T-cell (primary cell): ENCODE measurements at regions of chr14 and their contacts with region 1.

Region 1: GRCh38 chr14:21014761-21015190 is 10.1 kb downstream of the NDRG2 start:
- DNase-seq: peak; percentile 23 to 91 (median 73)
- ATAC-seq: peak; percentile 68 to 87 (median 79)
- H3K4me3 ChIP-seq: no peak overlapping the region
- H3K4me3 Mint-ChIP-seq: no peak overlapping the region
- H3K27ac ChIP-seq: no peak overlapping the region
- H3K27ac Mint-ChIP-seq: no peak overlapping the region
- H3K4me1 ChIP-seq: no peaks in the 10 kb centered on the region
- H3K4me1 Mint-ChIP-seq: no peaks in the 10 kb centered on the region
- H3K27me3 ChIP-seq: peaks cover 0 to 9% of the 10 kb centered on the region in 2 experiments
- H3K27me3 Mint-ChIP-seq: peaks cover 17 to 25% of the 10 kb centered on the region in 2 donors

Region 2: DNA sequence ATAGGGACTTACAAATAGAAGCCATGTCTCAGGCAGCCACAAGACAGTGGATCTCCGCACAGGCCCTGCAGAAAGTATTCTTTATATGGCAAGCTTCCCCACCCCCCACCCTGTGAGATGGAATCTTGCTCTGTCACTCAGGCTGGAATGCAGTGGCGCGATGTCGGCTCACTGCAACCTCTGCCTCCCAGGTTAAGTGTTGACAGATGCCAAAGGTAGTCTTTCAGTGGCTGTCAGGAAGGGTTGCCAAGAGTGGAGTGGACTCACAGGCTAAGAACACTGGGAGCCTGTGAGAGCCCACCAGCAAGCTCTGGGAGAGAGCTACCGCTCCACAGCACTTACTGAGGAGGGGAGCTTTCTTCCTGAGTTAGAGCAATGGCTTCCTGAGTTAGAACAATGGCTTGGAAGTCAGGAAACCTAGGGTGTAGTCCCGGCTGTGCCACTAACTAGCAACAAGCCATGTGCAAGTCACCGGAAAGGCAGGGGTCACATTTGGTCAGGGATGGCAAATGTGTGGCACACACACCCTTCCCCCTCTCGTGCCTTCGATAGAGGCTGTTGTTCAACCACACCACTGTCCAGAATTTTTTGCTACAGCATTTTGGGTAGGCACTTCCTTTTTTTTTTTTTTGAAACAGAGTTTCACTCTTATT is 214.8 kb before region 1 on chr14:
- CTCF ChIA-PET with region 1: no interaction called
- POLR2A ChIA-PET with region 1: no interaction called
- DNase-seq: no peak
- ATAC-seq: no peak
- H3K4me3 ChIP-seq: no peak overlapping the region
- H3K4me3 Mint-ChIP-seq: no peak overlapping the region
- H3K27ac ChIP-seq: no peak overlapping the region
- H3K27ac Mint-ChIP-seq: no peak overlapping the region
- H3K4me1 ChIP-seq: no peaks in the 10 kb centered on the region
- H3K4me1 Mint-ChIP-seq: peaks cover 4 to 15% (median 6%) of the 10 kb centered on the region in 3 donors
- H3K27me3 ChIP-seq: peaks cover 0 to 23% of the 10 kb centered on the region in 2 experiments
- H3K27me3 Mint-ChIP-seq: peaks cover 5 to 23% of the 10 kb centered on the region in 2 donors

Region 3: DNA sequence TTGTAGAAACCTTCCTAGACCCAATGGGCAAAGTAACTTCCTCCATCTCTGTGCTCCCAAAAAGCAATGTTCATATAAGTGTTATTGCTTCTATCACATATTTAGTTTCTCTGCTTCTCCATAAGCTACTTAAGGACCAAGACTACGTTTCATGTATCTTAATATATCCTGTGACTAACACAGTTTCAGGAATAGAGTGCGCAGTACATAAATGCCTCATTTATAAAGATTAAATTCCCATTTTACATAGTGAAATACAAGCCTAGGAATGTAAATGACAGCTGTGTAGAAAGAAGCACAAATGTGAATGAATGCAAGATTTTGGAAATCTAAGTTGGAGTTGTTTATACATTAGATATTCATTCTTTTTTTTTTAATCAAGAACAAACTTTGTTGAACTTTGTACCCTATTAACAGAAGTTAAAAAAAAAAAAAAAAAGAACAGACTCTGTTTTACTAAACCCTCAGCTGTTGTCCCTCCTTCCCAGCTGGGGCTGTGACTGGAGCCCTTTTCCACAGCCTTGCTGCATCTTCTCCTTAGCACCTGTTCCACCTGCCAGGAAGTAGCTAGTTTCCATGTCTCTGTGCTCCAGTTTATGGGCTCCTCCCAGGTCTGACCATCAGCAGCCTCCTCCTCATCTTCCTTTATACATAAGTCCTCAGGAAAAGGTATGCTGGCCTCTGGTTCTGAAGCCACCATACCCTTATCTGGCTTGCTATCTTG is 32.0 kb before region 1 on chr14:
- CTCF ChIA-PET with region 1: no interaction called
- POLR2A ChIA-PET with region 1: no interaction called
- DNase-seq: no peak
- ATAC-seq: no peak
- H3K4me3 ChIP-seq: no peak overlapping the region
- H3K4me3 Mint-ChIP-seq: no peak overlapping the region
- H3K27ac ChIP-seq: no peak overlapping the region
- H3K27ac Mint-ChIP-seq: no peak overlapping the region
- H3K4me1 ChIP-seq: no peaks in the 10 kb centered on the region
- H3K4me1 Mint-ChIP-seq: no peaks in the 10 kb centered on the region
- H3K27me3 ChIP-seq: peaks cover 0 to 5% of the 10 kb centered on the region in 2 experiments
- H3K27me3 Mint-ChIP-seq: peaks cover 8 to 12% of the 10 kb centered on the region in 2 donors

Region 4: GRCh38 chr14:21003788-21004346 is 10.9 kb before region 1 on chr14:
- CTCF ChIA-PET with region 1: interaction called, 8 to 22 read pairs
- POLR2A ChIA-PET with region 1: no interaction called
- DNase-seq: no peak
- ATAC-seq: no peak
- H3K4me3 ChIP-seq: no peak overlapping the region
- H3K4me3 Mint-ChIP-seq: no peak overlapping the region
- H3K27ac ChIP-seq: no peak overlapping the region
- H3K27ac Mint-ChIP-seq: no peak overlapping the region
- H3K4me1 ChIP-seq: no peaks in the 10 kb centered on the region
- H3K4me1 Mint-ChIP-seq: no peaks in the 10 kb centered on the region
- H3K27me3 ChIP-seq: no peaks in the 10 kb centered on the region
- H3K27me3 Mint-ChIP-seq: no peaks in the 10 kb centered on the region

Region 5: DNA sequence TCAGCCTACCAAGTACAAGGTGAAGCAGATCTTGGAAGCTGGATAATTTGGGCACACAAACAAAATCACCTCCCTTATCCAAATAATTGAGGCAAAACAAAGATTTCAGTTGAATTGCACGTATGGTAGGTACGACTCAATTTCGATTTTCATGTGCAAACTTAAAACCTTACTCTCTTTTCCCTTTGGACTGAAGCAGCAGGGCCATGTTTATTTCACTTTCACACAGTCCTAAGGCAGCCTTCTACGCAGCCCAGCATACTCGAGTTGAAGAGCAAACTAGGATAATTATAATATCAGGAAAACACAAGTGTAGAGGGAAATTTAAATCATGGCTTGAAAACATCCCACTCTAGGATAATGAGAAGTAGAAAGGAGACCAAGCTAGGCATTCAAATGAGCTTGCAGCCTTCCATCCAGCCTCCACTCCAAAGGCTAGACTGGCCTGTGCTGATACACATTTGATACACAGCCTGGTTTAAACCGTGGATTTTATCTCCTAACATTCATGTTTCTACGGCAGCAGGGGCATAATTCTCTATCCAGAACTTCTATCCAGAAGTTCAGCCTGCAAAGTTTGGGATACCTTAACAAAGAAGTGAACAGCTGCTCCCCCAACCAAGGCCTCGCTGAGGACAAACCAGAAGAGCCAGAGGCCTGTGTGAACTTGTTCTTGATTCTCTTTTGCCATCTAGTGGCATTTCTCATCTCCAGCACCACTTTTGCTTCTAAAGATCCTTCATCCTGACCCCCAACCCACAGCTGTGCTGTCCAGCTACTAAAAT is 25.0 kb after region 1 on chr14:
- CTCF ChIA-PET with region 1: interaction called, 47 to 53 read pairs
- POLR2A ChIA-PET with region 1: interaction called, 4 to 6 read pairs
- DNase-seq: peak in 12 of 35 experiments; percentile 6 to 68 (median 16)
- ATAC-seq: peak; percentile 67 to 81 (median 76)
- H3K4me3 ChIP-seq: no peak overlapping the region
- H3K4me3 Mint-ChIP-seq: no peak overlapping the region
- H3K27ac ChIP-seq: no peak overlapping the region
- H3K27ac Mint-ChIP-seq: peak overlapping the region in 1 of 2 donors; percentile 22
- H3K4me1 ChIP-seq: peaks cover 0 to 8% of the 10 kb centered on the region in 2 experiments
- H3K4me1 Mint-ChIP-seq: peaks cover 8 to 13% (median 8%) of the 10 kb centered on the region in 3 donors
- H3K27me3 ChIP-seq: peaks cover 0 to 12% of the 10 kb centered on the region in 2 experiments
- H3K27me3 Mint-ChIP-seq: peaks cover 5 to 13% of the 10 kb centered on the region in 2 donors

Region 6: GRCh38 chr14:21071225-21072030 is 56.7 kb after region 1 on chr14:
- CTCF ChIA-PET with region 1: interaction called, 7 to 23 read pairs
- POLR2A ChIA-PET with region 1: interaction called in 1 of 2 experiments, 8 read pairs
- DNase-seq: peak in 13 of 35 experiments; percentile 8 to 53 (median 30)
- ATAC-seq: peak; percentile 31 to 44 (median 40)
- H3K4me3 ChIP-seq: peak overlapping the region; percentile 46 to 63
- H3K4me3 Mint-ChIP-seq: peak overlapping the region; percentile 74 to 84 (median 76)
- H3K27ac ChIP-seq: no peak overlapping the region
- H3K27ac Mint-ChIP-seq: no peak overlapping the region
- H3K4me1 ChIP-seq: peaks cover 7 to 35% of the 10 kb centered on the region in 2 experiments
- H3K4me1 Mint-ChIP-seq: peaks cover 29 to 41% (median 38%) of the 10 kb centered on the region in 3 donors
- H3K27me3 ChIP-seq: peaks cover 7 to 68% of the 10 kb centered on the region in 2 experiments
- H3K27me3 Mint-ChIP-seq: peaks cover 54 to 64% of the 10 kb centered on the region in 2 donors

Region 7: GRCh38 chr14:21092273-21093011 is 77.7 kb after region 1 on chr14:
- CTCF ChIA-PET with region 1: interaction called, 18 to 42 read pairs
- POLR2A ChIA-PET with region 1: no interaction called
- DNase-seq: peak; percentile 72 to 97 (median 89)
- ATAC-seq: peak; percentile 58 to 95 (median 87)
- H3K4me3 ChIP-seq: no peak overlapping the region
- H3K4me3 Mint-ChIP-seq: no peak overlapping the region
- H3K27ac ChIP-seq: no peak overlapping the region
- H3K27ac Mint-ChIP-seq: no peak overlapping the region
- H3K4me1 ChIP-seq: peaks cover 3 to 27% of the 10 kb centered on the region in 2 experiments
- H3K4me1 Mint-ChIP-seq: peaks cover 22 to 34% (median 28%) of the 10 kb centered on the region in 3 donors
- H3K27me3 ChIP-seq: no peaks in the 10 kb centered on the region
- H3K27me3 Mint-ChIP-seq: no peaks in the 10 kb centered on the region

Region 8: DNA sequence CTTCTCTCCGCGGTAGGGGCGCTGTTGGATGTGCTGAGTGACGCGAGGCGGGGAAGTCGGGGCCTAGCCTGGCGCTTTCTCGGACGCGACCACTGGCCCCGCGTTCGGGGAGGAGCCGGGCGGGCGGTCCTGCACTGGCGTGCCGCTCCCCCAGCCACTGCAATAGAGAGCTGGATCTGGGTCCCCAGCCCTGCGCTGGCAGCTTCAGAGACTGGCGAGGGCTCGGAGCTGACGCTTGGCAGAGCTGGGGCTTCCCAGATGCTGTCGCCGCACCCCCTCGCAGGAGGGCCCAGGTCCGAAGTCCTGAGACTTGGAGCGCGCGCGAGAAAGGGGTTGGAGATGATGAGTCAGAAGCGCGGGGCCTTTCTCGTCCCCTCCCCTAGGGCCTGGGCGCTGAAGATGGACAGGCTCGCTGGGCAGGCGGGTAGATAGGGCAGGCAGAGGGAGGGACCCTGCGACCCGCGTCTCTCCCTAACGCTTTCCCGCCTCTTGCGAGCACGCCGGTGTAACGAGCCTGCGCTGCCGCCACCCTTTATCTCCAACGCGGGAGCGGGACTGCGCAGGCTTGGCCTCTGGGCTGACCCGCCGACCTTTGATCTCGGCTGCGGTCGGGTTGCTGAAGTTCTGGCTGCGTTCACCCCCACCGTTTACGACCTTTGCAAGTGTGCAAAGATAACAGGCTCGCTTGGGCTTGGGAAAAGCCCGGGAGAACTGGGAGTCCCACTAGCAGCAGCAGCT is 89.1 kb after region 1 on chr14:
- CTCF ChIA-PET with region 1: interaction called, 23 to 111 read pairs
- POLR2A ChIA-PET with region 1: interaction called in 1 of 2 experiments, 3 read pairs
- DNase-seq: peak; percentile 86 to 96 (median 92)
- ATAC-seq: peak; percentile 86 to 90 (median 88)
- H3K4me3 ChIP-seq: peak overlapping the region; percentile 82 to 84
- H3K4me3 Mint-ChIP-seq: peak overlapping the region; percentile 76 to 88 (median 82)
- H3K27ac ChIP-seq: peak overlapping the region; percentile 98
- H3K27ac Mint-ChIP-seq: peak overlapping the region; percentile 80 to 92
- H3K4me1 ChIP-seq: peaks cover 8 to 18% of the 10 kb centered on the region in 2 experiments
- H3K4me1 Mint-ChIP-seq: peaks cover 22 to 30% (median 29%) of the 10 kb centered on the region in 3 donors
- H3K27me3 ChIP-seq: peaks cover 0 to 9% of the 10 kb centered on the region in 2 experiments
- H3K27me3 Mint-ChIP-seq: peaks cover 0 to under 1% of the 10 kb centered on the region in 2 donors

Region 9: DNA sequence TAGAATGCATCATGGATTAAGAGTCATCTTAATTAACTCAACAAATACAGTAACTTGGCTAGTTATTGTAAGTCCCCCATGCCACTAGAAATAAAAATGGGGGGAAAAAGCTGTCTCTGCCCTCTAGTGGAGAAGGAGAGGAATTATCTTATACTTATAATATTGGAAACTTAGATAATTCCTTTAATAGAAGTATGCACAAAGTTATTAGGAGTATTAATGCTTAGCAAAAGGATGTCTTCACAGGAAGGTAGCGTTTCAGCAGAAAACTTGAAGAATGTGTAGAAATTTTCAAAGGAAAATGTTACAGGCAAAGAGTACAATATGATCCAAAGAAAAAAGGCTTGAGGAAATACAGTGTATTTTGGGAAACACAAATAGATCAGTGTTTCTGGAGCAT is 121.2 kb after region 1 on chr14:
- CTCF ChIA-PET with region 1: interaction called in 1 of 2 experiments, 10 read pairs
- POLR2A ChIA-PET with region 1: no interaction called
- DNase-seq: peak in 1 of 35 experiments; percentile 21
- ATAC-seq: no peak
- H3K4me3 ChIP-seq: no peak overlapping the region
- H3K4me3 Mint-ChIP-seq: no peak overlapping the region
- H3K27ac ChIP-seq: no peak overlapping the region
- H3K27ac Mint-ChIP-seq: no peak overlapping the region
- H3K4me1 ChIP-seq: no peaks in the 10 kb centered on the region
- H3K4me1 Mint-ChIP-seq: no peaks in the 10 kb centered on the region
- H3K27me3 ChIP-seq: peaks cover 0 to 5% of the 10 kb centered on the region in 2 experiments
- H3K27me3 Mint-ChIP-seq: peaks cover 0 to 2% of the 10 kb centered on the region in 2 donors